Vagina (tissue), 2 donors: ENCODE measurements at regions of chr19 and their contacts with region 1.

Region 1: DNA sequence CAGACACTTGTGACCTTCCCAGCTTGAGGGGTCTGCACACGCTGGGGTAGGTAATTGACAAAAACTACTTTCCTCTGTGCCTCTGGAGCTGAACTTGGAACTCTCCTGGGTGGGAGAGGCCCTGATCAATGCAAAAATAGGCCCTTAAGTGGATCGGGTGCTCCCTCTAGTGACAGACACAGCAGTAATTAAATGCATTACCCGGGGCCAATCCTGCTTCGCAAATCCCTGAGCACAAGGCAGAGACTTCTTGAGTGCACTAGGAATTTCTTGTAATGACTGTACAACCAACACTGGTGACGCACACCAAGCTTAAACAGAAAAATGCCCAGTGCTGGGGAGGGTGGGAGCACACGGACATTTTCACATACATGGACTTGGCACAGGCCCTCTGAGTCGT is 10.6 kb upstream of the UBE2S start:
- DNase-seq: no peak
- H3K4me3 ChIP-seq: no peak overlapping the region
- H3K27ac ChIP-seq: no peak overlapping the region
- H3K4me1 ChIP-seq: no peaks in the 10 kb centered on the region
- H3K27me3 ChIP-seq: no peaks in the 10 kb centered on the region
- CTCF ChIP-seq: peak; percentile 40 to 53 (median 50)
- POLR2A ChIP-seq: no peak

Region 2: GRCh38 chr19:55146078-55146704 is 272.0 kb before region 1 on chr19:
- intact Hi-C with region 1: loop called (anchors 10 kb)
- DNase-seq: no peak
- H3K4me3 ChIP-seq: peak overlapping the region; percentile 6 to 22
- H3K27ac ChIP-seq: no peak overlapping the region
- H3K4me1 ChIP-seq: peaks cover 9% of the 10 kb centered on the region
- H3K27me3 ChIP-seq: peaks cover 4% of the 10 kb centered on the region
- CTCF ChIP-seq: no peak
- POLR2A ChIP-seq: no peak

Region 3: DNA sequence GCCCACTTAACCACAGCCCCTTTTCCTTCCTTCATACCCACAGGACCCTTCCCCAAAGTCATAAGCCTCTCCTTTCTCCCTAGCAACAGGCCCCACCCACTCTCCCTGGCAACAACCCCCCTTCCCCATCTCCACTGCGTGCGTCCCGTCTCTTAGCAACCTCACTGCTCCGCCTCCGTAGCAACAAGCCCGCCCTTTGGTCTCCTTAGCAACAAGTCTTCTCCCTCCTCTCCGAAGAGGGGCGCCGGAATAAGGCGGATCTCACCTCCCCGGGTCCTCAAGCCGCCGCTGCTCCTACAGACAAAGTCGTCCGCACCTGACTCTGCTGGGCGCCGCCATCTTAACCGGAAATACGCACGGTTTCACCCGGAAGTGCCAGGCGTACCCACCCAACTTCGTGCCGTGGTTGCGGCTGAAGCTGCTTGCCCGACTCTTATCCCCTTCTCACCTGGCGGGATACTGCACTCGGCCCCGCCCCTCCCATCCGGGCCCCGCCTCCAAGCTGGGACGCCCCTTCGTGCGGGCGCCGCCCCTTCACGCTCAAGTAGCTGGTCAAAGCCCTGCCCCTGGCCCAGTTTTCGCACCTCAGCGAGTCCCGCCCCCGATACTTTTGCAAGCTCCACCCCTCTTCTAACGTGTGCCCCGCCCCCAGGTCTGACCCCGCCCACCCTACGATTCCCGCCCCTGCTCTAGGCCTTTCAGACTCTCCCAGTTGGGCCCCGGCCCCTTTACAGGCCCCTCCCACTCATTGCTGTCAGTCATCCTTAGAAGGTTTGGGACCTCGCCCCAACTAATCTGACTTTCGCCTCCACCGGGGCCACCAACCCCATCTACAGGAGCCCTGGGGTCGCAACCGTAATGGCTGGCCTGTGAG is 138.2 kb before region 1 on chr19 and contains the start of gene HSPBP1:
- intact Hi-C with region 1: no loop called
- DNase-seq: peak in 1 of 2 donors; percentile 96
- H3K4me3 ChIP-seq: peak within 1 kb of the TSS; percentile 59 to 65
- H3K27ac ChIP-seq: peak within 1 kb of the TSS; percentile 84
- H3K4me1 ChIP-seq: peaks cover 21% of the 10 kb centered on the region
- H3K27me3 ChIP-seq: no peaks in the 10 kb centered on the region
- CTCF ChIP-seq: no peak
- POLR2A ChIP-seq: no peak
- total RNA-seq, gene HSPBP1: 29.5 TPM